A549 (cell line): ENCODE measurements at regions of chr10 and their contacts with region 1.

Region 1: GRCh38 chr10:14536241-14537213 is 205.8 kb upstream of the FRMD4A start:
- DNase-seq: peak; percentile 50 to 81
- ATAC-seq: peak; percentile 57 to 79; a peak in 5 of 6 replicates
- H3K4me3 ChIP-seq: no peak overlapping the region
- H3K27ac ChIP-seq: peak overlapping the region; percentile 18 to 60; a peak in 2 of 6 replicates
- H3K4me1 ChIP-seq: peaks cover 59% of the 10 kb centered on the region
- CTCF ChIP-seq: peak; percentile 69
- EP300 ChIP-seq: no peak
- POLR2A ChIP-seq: no peak
- RAD21 ChIP-seq: peak; percentile 80 to 88

Region 2: DNA sequence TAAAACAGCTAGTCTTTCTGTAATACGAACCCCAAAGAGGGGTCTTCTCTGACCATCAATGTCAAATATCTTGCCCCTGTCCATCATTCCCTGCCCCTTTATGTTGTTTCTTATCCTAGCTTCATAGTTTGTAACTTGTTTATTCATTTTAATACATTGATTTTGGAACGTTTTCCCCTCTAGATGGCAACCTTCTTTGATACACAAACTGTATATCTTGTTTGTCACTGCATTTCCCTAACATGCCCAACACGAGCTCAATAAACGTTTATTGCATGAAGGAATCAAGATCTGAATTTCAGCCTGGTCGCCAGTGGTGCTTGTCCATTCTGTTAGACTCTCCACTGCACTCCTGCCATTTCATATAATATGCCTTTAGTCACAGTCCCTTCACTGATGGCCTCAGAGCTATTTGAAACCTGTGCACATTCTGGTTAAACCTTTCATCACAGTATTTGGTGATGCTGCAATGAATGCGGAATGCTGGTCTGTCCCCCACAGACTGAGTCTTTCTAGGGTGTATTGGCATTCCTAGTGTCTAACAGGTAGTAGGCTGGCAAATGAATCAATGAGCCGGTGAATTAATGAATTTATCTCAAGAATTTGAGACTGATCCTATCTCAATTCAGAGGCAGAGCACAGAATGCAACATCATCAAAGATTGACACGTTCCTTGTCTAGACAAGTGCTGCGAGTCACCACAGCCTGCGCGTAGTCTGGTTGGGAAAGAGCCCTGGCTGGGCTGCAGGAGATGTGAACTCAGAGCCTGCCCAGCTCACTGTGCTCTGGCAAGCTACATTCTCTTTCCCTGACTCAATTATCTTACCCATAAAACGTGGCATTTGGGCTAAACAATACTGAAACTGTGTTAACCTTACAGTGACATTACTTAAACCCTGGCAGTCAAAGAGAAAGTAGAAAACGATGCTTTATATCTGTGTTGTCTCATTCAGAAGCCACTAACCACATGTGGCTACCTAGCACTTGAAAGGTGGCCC is 150.6 kb before region 1 on chr10:
- CTCF ChIA-PET with region 1: no interaction called
- POLR2A ChIA-PET with region 1: no interaction called
- DNase-seq: peak in 1 of 2 experiments; percentile 57
- ATAC-seq: peak; percentile 81 to 93
- H3K4me3 ChIP-seq: no peak overlapping the region
- H3K27ac ChIP-seq: no peak overlapping the region
- H3K4me1 ChIP-seq: no peaks in the 10 kb centered on the region; the same call in 2 of the 3 replicates
- CTCF ChIP-seq: peak; percentile 49; the same call in 2 of the 3 replicates
- EP300 ChIP-seq: no peak
- POLR2A ChIP-seq: no peak
- RAD21 ChIP-seq: peak in 1 of 2 experiments; percentile 20; a peak in 2 of 5 replicates

Region 3: GRCh38 chr10:14556285-14556956 is 19.9 kb after region 1 on chr10:
- CTCF ChIA-PET with region 1: interaction called, 11 read pairs
- POLR2A ChIA-PET with region 1: no interaction called
- DNase-seq: peak; percentile 24 to 48
- ATAC-seq: peak; percentile 44 to 52; a peak in 5 of 6 replicates
- H3K4me3 ChIP-seq: no peak overlapping the region
- H3K27ac ChIP-seq: peak overlapping the region in 1 of 2 experiments; percentile 40; a peak in 3 of 6 replicates
- H3K4me1 ChIP-seq: peaks cover 85% of the 10 kb centered on the region
- CTCF ChIP-seq: no peak
- EP300 ChIP-seq: no peak
- POLR2A ChIP-seq: no peak
- RAD21 ChIP-seq: 0 out of 5 replicates have a peak, but pooled peaks of 1 of the 2 experiments have one; percentile 22

Region 4: DNA sequence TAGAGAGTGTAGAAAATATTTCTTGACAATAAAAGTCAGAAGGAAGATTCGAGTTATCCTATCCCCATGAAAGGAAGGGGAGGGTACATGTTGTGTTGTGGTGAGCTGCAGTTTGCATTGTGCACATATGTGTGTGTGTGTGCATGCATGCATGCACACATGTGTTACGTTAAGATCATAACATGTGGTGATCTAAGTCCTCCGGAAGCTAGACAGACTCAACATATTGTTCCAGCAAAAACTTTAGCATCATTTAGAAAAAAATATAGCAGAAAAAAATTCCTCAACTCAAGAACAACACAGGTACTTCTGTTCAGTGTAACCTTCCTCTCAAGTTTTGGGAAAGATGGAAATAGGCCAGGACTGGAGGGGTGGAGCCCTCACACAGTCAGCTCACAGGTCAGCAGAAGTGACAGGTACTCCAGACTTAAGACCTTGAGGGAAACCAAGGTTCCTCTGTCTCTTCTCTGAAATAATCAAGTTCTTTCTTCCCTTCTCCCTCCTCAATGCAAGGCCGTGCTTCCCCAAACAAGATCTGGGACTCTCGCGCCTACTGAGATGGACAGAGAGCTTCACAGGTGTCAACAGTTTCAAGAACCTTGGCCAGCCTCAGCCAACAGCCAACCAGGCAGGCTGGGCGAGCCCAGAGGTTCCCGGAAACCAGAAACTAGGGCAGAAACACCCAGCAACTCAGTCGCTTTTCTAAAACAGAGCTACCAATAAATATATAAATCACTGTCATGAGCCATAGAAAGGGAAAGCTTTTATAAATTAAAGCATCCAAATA is 32.9 kb after region 1 on chr10:
- CTCF ChIA-PET with region 1: interaction called, 11 read pairs
- POLR2A ChIA-PET with region 1: no interaction called
- DNase-seq: no peak
- ATAC-seq: no peak
- H3K4me3 ChIP-seq: no peak overlapping the region
- H3K27ac ChIP-seq: peak overlapping the region; percentile 77 to 84; a peak in 5 of 6 replicates
- H3K4me1 ChIP-seq: peaks cover 74% of the 10 kb centered on the region
- CTCF ChIP-seq: no peak
- EP300 ChIP-seq: no peak
- POLR2A ChIP-seq: no peak
- RAD21 ChIP-seq: no peak

Region 5: DNA sequence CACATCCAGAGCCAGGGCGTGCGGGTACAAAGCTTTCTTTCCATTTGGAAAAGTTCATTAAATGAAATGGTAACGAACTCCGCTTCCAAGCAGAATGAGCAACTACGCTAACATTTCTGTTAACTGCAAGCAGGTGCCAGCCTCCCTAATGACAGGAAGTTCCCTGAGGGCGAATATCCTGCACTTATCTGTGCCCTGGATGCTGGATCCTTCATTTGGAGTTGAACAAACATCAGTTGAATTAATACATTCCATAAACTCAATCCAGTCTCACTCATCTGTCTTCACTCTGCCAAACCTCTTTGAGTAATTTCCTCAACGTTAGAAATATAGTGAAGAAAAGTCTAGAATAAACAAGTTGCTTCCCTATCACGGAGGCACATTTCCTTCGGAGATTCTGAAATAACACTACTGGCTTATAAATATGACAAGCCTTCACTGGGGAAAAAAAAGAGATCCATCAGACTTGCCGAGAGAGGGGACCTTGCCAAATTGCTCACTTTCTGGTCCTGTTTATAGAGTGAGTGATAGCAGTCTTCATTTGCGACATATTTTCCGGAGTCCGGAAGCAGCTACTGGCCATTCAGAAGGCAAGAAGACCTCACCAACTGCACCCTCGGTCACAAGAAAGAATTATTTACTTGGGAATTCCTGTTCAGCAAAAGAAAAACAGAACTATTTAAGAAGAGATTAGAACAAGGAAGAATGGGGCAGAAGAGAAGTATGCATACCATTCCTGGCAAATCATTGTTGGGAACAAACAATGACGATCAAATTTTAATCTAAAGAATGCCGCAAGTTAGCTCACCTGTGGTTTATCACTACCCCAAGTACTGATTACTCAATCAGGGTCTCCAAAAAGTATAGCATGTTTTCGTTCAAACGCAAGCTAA is 41.8 kb after region 1 on chr10:
- CTCF ChIA-PET with region 1: interaction called, 13 read pairs
- POLR2A ChIA-PET with region 1: no interaction called
- DNase-seq: peak in 1 of 2 experiments; percentile 92
- ATAC-seq: peak; percentile 72 to 80
- H3K4me3 ChIP-seq: peak overlapping the region; percentile 21; the same call in 2 of the 3 replicates
- H3K27ac ChIP-seq: peak overlapping the region; percentile 83 to 88
- H3K4me1 ChIP-seq: peaks cover 84% of the 10 kb centered on the region
- CTCF ChIP-seq: no peak
- EP300 ChIP-seq: peak; percentile 79 to 86; a peak in 3 of 5 replicates
- POLR2A ChIP-seq: no peak
- RAD21 ChIP-seq: peak in 1 of 2 experiments; percentile 38; a peak in 1 of 5 replicates

Region 6: GRCh38 chr10:14843327-14843988 is 306.9 kb after region 1 on chr10:
- CTCF ChIA-PET with region 1: interaction called, 14 read pairs
- POLR2A ChIA-PET with region 1: no interaction called
- DNase-seq: no peak
- ATAC-seq: no peak
- H3K4me3 ChIP-seq: no peak overlapping the region
- H3K27ac ChIP-seq: no peak overlapping the region
- H3K4me1 ChIP-seq: peaks cover 5% of the 10 kb centered on the region; the same call in 1 of the 3 replicates
- CTCF ChIP-seq: no peak
- EP300 ChIP-seq: no peak
- POLR2A ChIP-seq: no peak
- RAD21 ChIP-seq: no peak